ENCODE measurements at regions of chr5 and their contacts with region 1.

Region 1: DNA sequence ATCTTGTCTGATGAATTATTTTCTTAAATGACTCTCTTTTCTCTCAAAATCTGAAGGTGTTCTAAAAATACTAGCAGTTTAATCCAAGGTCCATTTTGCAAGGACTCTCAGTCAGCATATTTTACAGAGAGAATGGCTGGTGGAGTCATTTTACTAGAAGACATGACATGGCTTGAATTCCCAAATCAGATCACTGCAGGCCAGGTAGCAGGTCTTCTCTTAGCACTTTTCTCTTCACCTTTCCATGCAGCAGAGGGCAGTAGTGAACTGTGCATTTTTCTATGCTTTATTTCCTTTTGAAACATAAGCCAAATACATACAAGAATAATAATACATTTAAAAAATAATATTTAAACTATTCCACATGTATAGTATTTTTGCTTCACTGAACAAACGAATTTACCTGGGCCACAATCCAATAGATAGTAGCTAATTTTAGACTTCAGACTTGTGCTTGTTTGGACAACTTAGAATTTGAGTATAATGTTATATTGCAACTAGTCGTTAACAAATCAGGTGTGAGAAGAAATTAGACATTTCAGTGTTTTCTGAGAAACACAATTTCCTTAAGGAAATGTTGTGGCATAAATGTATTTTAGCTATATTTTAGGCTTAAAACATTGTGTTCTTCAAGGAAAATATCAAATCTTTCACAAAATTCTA is 289.4 kb upstream of the DAB2 start:
- DNase-seq: no peak
- H3K4me3 ChIP-seq: no peak overlapping the region
- H3K27me3 ChIP-seq: no peaks in the 10 kb centered on the region
- CTCF ChIP-seq: peak; percentile 74

Region 2: DNA sequence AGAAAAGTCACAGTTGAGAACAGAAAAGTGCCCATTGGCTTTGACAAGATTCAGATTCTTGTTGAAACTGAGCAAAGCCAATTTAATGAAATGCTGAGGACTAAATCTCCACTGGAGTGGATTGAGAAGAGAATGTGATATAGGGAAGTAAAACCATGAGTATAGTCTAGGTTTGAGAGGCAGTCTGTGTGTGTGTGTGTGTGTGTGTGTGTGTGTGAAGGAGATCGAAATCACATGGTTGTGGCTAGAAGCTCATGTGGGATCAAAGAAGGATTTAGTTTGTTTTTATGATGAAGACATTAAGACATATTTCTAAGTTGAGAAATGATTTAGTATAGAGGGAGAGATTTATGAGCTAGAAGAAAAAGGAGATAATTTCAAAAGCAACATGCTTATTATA is 13.6 kb before region 1 on chr5:
- CTCF ChIA-PET with region 1: interaction called, 16 read pairs
- POLR2A ChIA-PET with region 1: no interaction called
- DNase-seq: no peak
- H3K4me3 ChIP-seq: no peak overlapping the region
- H3K27me3 ChIP-seq: no peaks in the 10 kb centered on the region
- CTCF ChIP-seq: no peak

Region 3: GRCh38 chr5:39948867-39949468 is 234.8 kb after region 1 on chr5:
- CTCF ChIA-PET with region 1: interaction called, 24 read pairs
- POLR2A ChIA-PET with region 1: no interaction called
- DNase-seq: peak; percentile 1
- H3K4me3 ChIP-seq: no peak overlapping the region
- H3K27me3 ChIP-seq: no peaks in the 10 kb centered on the region
- CTCF ChIP-seq: peak; percentile 63

Region 4: DNA sequence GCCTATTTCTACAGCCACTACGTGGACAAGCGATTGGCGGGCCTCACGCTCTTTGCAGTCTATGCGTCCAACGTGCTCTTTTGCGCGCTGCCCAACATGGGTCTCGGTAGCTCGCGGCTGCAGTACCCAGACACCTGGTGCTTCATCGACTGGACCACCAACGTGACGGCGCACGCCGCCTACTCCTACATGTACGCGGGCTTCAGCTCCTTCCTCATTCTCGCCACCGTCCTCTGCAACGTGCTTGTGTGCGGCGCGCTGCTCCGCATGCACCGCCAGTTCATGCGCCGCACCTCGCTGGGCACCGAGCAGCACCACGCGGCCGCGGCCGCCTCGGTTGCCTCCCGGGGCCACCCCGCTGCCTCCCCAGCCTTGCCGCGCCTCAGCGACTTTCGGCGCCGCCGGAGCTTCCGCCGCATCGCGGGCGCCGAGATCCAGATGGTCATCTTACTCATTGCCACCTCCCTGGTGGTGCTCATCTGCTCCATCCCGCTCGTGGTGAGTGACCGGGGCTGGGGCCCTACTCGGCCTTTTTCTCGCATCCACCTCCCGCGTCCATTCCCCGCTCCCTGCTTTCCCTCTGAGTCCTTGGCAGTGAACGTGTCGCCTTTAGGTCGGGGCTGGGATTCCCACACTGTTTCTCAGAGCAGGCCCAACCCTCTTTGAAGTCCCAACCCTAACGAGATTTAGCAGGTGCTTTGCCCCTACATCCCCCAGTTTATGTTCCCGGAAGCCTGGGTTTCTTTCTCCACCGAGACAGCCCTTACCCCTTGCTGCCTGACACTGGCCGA is 967.4 kb after region 1 on chr5:
- CTCF ChIA-PET with region 1: interaction called, 15 read pairs
- POLR2A ChIA-PET with region 1: interaction called, 3 read pairs
- DNase-seq: no peak
- H3K4me3 ChIP-seq: peak overlapping the region; percentile 11; the same call in 1 of the 2 replicates
- H3K27me3 ChIP-seq: peaks cover 19% of the 10 kb centered on the region
- CTCF ChIP-seq: no peak

Region 5: GRCh38 chr5:40688127-40688761 is 974.1 kb after region 1 on chr5:
- CTCF ChIA-PET with region 1: interaction called, 15 read pairs
- POLR2A ChIA-PET with region 1: interaction called, 3 read pairs
- DNase-seq: peak; percentile 22
- H3K4me3 ChIP-seq: no peak overlapping the region
- H3K27me3 ChIP-seq: no peaks in the 10 kb centered on the region
- CTCF ChIP-seq: peak; percentile 79

Region 6: DNA sequence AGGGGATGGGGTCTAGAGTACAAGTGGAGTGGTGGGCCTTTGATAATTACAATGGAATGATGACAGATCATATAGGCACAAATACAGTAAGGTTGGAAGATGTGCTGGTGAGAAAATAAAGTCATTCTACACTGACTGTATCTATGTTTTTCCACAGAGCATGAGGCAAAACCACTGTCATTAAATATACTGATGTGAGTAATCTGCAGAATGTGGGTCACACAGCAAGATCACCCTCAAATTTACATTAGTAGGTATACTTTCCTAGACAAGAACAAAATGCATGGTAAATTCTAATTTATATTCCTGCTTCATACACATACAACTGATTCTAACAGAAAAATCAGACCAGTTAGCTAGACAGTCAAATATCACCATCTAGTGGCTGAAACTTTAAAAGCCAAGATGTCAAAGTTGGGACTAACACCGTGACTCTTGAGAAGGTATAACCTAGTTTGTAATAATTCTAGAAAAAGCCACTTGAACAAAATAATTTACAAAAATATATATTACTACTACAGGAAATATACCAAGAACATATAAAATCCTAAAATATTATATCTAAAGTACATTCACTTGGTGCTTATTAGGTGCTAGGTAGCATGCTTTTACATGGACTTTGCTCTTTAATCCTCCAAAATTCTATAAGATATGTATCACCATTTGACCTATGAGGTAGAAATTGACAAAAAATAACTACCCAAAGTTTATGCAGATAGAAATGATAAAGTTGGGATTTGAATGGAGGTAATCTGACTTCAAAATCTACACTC is 1022.1 kb after region 1 on chr5:
- CTCF ChIA-PET with region 1: interaction called, 12 read pairs
- POLR2A ChIA-PET with region 1: no interaction called
- DNase-seq: no peak
- H3K4me3 ChIP-seq: no peak overlapping the region
- H3K27me3 ChIP-seq: no peaks in the 10 kb centered on the region
- CTCF ChIP-seq: peak; percentile 70